Gastrocnemius medialis (tissue), 4 donors: ENCODE measurements at regions of chr2 and their contacts with region 1.

Region 1: DNA sequence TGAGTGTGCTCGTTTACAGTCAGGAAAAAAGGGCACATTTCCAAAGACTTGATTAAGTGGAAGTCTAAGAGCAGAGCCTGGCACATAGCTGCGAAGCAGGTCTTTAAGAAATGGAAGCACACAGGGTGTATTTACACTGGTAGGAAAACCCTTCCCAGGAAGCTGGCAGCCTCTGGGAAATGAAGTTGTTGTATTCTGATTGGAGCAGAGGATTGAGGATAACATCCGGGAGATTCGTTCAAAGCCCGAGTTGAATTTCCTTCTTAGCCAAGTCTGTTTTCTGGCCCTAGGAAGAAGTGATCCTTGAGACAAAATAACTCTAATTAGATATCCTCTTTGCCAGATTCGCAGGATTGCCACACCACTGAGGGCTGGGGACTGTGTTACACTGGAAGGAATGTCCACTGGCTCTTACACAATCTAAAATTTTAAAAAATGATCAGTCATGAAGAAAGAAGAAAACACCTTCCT is 75.9 kb downstream of the ITGB1BP1 start:
- DNase-seq: peak; percentile 38 to 77
- ATAC-seq: peak; percentile 90 to 92
- H3K4me3 ChIP-seq: no peak overlapping the region
- H3K27ac ChIP-seq: peak overlapping the region; percentile 42 to 64 (median 58)
- H3K4me1 ChIP-seq: peaks cover 0 to 8% of the 10 kb centered on the region in 2 donors
- H3K27me3 ChIP-seq: no peaks in the 10 kb centered on the region
- CTCF ChIP-seq: no peak
- POLR2A ChIP-seq: no peak

Region 2: DNA sequence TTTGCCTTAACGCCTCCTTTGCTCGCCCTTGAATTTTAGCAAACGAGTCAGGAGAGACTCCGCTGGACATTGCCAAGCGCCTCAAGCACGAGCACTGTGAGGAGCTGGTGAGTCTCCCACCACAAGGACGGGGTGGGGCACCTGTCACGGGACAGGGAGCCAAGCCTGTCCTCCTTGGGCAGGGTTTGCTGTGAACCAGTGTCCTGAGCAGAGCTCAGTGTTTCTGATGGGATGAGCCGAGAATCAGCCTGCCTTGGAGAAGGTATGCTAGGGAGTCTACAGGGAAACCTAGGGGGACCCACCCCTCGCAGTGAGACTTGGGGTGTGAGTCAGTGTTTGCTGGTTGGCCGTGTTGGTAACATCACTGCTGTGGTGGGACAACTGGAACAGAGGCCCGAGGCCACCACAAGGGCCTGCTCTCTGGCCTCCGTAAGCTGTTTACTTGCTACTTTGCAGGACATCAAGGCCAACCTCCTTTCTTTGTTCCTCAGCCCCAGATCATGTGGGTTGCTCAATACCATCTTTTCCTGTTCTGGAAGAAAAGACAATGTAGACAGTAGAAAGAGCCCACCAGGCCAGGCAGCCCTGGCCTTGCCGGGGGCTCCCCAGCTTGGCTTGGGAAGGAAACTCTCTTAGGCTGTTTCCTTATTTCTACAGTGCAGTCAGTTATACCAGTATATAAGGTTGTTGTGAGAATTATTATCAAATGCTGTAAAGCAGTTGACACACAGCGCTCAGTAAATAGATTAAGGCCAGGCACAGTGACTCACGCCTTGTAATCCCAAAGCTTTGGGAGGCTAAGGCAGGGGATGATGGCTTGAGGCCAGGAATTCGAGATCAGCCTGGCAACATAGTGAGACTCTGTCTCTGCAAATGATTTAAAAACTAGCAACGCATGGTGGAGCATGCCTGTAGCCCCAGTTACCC is 33.5 kb after region 1 on chr2:
- in situ Hi-C with region 1: no loop called
- intact Hi-C with region 1: loop called (anchors 2 kb)
- DNase-seq: peak; percentile 32 to 66
- ATAC-seq: peak; percentile 63 to 72
- H3K4me3 ChIP-seq: no peak overlapping the region
- H3K27ac ChIP-seq: peak overlapping the region; percentile 53 to 66 (median 57)
- H3K4me1 ChIP-seq: peaks cover 3 to 8% of the 10 kb centered on the region in 2 donors
- H3K27me3 ChIP-seq: no peaks in the 10 kb centered on the region
- CTCF ChIP-seq: no peak
- POLR2A ChIP-seq: no peak